Kidney (tissue), 22 donors: ENCODE measurements at regions of chr12 and their contacts with region 1.

Region 1: DNA sequence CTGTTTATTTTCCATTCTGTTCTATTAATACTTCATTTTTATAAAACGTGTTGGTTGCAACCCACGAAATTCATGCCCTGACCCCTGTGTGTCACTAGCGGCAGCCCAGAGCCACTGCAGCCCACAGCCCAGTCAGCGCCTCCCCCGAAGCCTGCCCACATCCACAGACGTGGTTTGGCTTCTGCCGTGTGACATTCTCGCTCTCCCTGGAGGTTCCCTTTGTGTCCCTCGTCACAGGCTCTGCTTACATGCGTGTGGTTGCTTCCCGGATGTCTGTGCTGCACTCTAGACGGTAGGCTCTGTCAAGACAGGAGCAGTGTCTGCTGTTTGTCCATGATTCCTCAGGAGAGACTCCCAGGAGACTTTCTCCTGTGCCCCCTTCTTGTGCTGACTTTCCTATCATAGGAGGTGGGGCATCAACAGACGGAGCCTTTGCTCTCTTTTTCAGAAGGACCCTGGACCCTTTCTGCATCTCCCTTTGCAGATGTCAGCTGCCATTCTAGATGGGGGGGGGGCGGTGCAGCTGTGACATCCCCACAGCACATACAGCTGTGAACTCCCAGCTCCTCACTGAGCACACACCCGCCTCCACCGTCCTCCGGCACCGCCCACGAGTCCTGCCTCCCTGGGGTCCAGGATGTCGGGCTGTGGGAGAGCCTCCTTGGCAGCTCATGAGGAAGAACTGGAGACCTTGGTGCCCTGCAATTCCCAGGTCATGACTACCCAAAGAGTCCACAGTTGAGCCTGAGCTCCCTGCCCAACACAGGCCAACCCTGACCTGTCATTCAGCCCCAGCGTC is 36.8 kb upstream of the PIWIL1 start:
- DNase-seq: peak in 1 of 5 donors; percentile 23
- H3K4me3 ChIP-seq: no peak overlapping the region
- H3K27ac ChIP-seq: no peak overlapping the region
- H3K4me1 ChIP-seq: peaks cover 0 to 4% (median 0%) of the 10 kb centered on the region in 3 donors
- H3K27me3 ChIP-seq: no peaks in the 10 kb centered on the region
- CTCF ChIP-seq: no peak

Region 2: GRCh38 chr12:130053651-130054069 is 247.3 kb before region 1 on chr12:
- intact Hi-C with region 1: loop called (anchors 10 kb)
- DNase-seq: peak in 2 of 5 donors; percentile 25 to 59
- H3K4me3 ChIP-seq: no peak overlapping the region
- H3K27ac ChIP-seq: no peak overlapping the region
- H3K4me1 ChIP-seq: no peaks in the 10 kb centered on the region
- H3K27me3 ChIP-seq: peaks cover 3% of the 10 kb centered on the region
- CTCF ChIP-seq: no peak